ENCODE measurements at regions of chr7 and their contacts with region 1.

Region 1: GRCh38 chr7:81690251-81690650 is 79.6 kb downstream of the HGF start:
- DNase-seq: no peak
- H3K4me3 ChIP-seq: no peak overlapping the region
- H3K4me3 Mint-ChIP-seq: no peak overlapping the region
- H3K27ac ChIP-seq: no peak overlapping the region
- H3K27ac Mint-ChIP-seq: no peak overlapping the region
- H3K4me1 ChIP-seq: no peaks in the 10 kb centered on the region
- H3K4me1 Mint-ChIP-seq: no peaks in the 10 kb centered on the region
- H3K27me3 ChIP-seq: no peaks in the 10 kb centered on the region
- H3K27me3 Mint-ChIP-seq: no peaks in the 10 kb centered on the region

Region 2: DNA sequence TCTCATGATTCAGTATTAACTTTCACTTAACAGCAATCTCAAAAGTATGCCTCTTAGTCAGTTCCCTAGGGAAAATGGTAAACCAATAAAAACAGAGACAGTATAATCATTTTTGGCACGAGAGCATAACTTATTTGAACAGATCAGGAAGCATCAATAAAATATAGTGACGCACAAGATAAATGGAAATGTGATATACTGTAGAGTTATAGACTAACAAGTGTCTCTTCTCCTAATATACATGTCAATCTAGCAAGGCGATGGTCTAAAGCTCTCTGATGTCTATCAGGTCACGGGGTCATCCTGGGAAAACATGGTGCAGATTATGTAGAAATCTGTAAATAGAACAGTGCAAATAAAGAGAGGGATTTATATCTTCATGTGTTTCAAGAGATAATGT is 52.0 kb before region 1 on chr7:
- CTCF ChIA-PET with region 1: no interaction called
- POLR2A ChIA-PET with region 1: no interaction called
- intact Hi-C with region 1: loop called (anchors 10 kb)
- DNase-seq: no peak
- H3K4me3 ChIP-seq: no peak overlapping the region
- H3K4me3 Mint-ChIP-seq: no peak overlapping the region
- H3K27ac ChIP-seq: no peak overlapping the region
- H3K27ac Mint-ChIP-seq: no peak overlapping the region
- H3K4me1 ChIP-seq: no peaks in the 10 kb centered on the region
- H3K4me1 Mint-ChIP-seq: no peaks in the 10 kb centered on the region
- H3K27me3 ChIP-seq: no peaks in the 10 kb centered on the region
- H3K27me3 Mint-ChIP-seq: no peaks in the 10 kb centered on the region

Region 3: DNA sequence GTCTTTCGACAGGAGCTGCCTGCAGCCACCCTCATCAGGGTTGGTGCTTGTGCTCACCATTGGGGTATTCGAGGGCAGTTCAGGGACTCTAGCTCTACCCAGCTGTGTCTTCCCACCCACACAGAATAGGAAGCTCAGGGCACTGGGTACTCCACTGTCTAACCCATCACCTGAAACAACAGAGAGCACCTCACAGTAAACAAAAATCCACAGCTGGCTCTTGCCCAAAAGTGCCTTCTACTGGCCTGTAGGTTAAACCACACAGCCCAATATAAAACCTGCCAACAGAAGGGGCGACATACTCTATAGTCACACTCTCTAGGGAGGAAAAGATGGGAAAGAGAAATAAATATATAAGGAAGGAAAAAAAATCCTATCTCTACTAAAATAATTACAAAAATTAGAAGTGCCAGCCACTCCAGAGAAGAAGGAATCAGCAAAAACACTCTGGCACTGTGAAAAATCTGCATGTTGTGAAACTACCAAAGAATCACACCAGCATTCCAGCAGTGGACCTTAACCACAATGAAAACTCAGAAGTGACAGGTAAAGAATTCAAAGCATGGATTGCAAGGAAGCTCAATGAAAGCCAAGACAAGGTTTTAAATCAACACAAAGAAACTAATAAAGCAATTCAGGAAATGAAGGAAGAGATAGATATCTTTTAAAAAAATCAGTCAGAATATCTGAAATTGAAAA is 30.4 kb before region 1 on chr7:
- CTCF ChIA-PET with region 1: no interaction called
- POLR2A ChIA-PET with region 1: no interaction called
- intact Hi-C with region 1: no loop called
- DNase-seq: no peak
- H3K4me3 ChIP-seq: no peak overlapping the region
- H3K4me3 Mint-ChIP-seq: no peak overlapping the region
- H3K27ac ChIP-seq: no peak overlapping the region
- H3K27ac Mint-ChIP-seq: no peak overlapping the region
- H3K4me1 ChIP-seq: no peaks in the 10 kb centered on the region
- H3K4me1 Mint-ChIP-seq: no peaks in the 10 kb centered on the region
- H3K27me3 ChIP-seq: no peaks in the 10 kb centered on the region
- H3K27me3 Mint-ChIP-seq: no peaks in the 10 kb centered on the region